CD4-positive, alpha-beta T cell (primary cell): ENCODE measurements at regions of chr1 and their contacts with region 1.

Region 1: DNA sequence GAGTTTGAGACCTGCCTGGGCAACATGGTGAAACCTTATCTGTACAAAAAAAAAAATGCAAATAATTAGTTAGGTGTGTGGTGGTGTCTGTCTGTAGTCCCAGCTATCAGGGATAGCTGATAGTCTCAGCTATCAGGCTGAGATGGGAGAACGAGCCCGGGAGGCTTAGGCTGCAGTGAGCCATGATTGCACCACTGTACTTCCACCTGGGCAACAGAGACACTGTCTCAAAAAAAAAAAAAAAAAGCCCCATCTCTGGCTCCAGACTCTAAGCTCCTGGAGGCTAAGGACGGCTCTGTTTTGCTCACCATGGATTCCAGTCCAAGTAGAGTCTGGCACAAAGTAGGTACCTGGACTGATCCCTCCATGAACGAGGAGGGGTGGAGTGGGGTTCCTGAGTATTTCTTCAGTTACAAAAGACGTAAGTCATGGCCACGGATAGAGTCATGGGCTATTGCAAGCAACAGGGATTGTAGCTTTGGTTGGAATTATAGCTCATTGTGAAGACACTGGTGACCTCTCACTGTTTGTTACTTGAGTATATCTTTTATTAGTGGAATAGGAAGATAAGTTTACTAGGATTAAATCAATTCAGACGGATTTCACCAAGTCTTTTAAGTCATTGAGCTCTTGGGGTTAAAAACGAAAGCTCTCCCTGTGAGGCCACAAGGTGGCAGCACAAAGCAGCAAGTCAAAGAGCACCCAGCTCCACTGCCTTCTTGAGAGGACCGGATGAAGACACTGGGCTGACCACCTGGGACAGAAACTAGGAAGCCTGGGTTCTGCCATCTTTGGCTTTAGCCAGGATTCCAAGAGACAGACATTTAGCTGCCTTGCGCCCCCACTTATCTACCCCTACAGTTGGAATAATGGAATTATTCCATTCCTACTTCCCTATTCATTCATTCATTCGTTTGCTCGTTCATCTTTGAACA is 35.6 kb upstream of the TMEM61 start:
- DNase-seq: peak; percentile 21 to 82 (median 50)
- ATAC-seq: peak; percentile 49
- H3K4me3 ChIP-seq: no peak overlapping the region
- H3K4me3 Mint-ChIP-seq: no peak overlapping the region
- H3K27ac ChIP-seq: no peak overlapping the region
- H3K27ac Mint-ChIP-seq: no peak overlapping the region
- H3K4me1 ChIP-seq: peaks cover 6% of the 10 kb centered on the region
- H3K4me1 Mint-ChIP-seq: peaks cover 14% of the 10 kb centered on the region
- H3K27me3 ChIP-seq: no peaks in the 10 kb centered on the region
- H3K27me3 Mint-ChIP-seq: peaks cover 7% of the 10 kb centered on the region
- CTCF ChIP-seq: peak; percentile 77

Region 2: DNA sequence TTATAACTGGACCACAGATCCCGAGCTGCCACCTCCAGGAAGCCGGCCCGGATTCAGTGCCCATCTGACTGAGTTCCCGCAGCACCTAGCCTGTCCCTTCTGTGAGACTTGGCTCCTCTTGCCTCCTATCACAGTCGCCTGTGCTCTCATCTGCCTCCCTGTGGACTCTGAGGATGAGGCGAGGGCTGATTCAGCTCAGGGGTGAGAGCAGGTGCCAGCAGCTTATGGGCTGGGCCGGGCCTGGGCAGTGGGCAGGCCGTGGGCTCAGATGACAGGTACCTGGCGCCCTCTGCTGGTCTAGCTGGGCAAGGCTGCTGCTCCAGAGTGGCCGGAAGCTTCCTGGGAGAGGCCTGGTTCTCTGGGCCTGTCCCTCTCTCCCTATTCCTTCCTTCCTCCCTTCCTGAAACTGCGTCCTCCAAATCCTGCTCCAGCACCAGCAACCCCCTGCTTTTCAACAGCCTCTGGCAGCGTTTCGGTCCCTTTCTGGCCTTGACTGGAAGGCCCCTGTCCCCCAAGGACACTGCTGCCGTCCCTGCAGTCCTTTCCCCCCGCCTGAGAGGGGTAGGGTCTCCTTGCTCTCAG is 77.2 kb after region 1 on chr1:
- CTCF ChIA-PET with region 1: interaction called, 8 read pairs
- POLR2A ChIA-PET with region 1: interaction called, 3 read pairs
- intact Hi-C with region 1: loop called in 1 of 2 experiments (anchors 1 kb)
- DNase-seq: peak; percentile 27 to 76 (median 46)
- ATAC-seq: peak; percentile 76
- H3K4me3 ChIP-seq: no peak overlapping the region
- H3K4me3 Mint-ChIP-seq: no peak overlapping the region
- H3K27ac ChIP-seq: no peak overlapping the region
- H3K27ac Mint-ChIP-seq: no peak overlapping the region
- H3K4me1 ChIP-seq: peaks cover 5% of the 10 kb centered on the region
- H3K4me1 Mint-ChIP-seq: no peaks in the 10 kb centered on the region
- H3K27me3 ChIP-seq: no peaks in the 10 kb centered on the region
- H3K27me3 Mint-ChIP-seq: peaks cover 5% of the 10 kb centered on the region
- CTCF ChIP-seq: peak; percentile 59